Ascending aorta (tissue), 2 donors: ENCODE measurements at regions of chr6 and their contacts with region 1.

Region 1: DNA sequence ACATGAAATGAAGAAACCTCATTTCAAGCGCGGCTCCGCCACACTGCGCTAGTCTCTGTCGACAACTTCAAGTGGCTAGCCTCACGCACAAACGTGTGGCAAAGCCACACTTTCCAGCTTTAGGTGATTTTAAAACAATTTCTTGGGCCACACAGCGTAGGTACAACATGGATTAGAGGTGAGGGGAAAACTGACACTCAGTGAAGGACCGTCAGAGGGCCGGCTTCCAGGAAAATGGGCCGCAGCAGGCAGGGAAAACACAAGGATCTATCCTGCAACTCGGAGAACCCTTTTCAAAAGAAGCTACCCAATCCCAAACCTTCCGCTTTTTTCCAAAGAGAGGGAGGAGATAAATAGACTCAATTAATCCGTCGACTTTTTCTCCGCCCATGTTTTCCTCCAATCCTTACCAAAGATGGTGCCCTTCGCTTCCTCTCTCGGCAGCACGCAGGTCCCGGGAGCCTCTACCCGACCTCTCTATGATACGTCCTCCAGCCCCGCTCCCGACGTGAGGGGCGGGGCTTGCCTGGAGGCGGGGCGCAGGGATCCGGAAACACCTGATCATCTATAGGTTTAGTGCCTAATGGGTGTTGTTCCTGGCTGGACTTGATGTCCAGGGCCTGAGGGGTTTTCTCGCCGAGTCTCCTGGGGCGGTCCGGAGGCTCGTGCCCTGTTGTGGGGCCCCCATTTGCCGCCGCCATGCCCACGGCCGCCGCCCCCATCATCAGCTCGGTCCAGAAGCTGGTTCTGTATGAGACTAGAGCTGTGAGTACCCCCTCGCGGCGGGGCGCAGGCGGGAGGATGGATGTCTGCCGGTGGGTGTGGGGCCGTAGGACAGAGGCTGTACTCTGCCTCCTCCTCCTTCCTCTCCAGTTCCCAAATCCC is at the starts of genes AK9 and FIG4:
- DNase-seq: peak; percentile 86 to 96
- H3K4me3 ChIP-seq: peak within 1 kb of the TSS; percentile 65 to 74
- H3K27ac ChIP-seq: peak within 1 kb of the TSS; percentile 83 to 90
- H3K4me1 ChIP-seq: no peaks in the 10 kb centered on the region
- H3K27me3 ChIP-seq: no peaks in the 10 kb centered on the region
- CTCF ChIP-seq: peak in 2 of 3 experiments; percentile 3 to 38
- total RNA-seq, gene AK9: 0.75 TPM
- total RNA-seq, gene FIG4: 27.9 TPM

Region 2: DNA sequence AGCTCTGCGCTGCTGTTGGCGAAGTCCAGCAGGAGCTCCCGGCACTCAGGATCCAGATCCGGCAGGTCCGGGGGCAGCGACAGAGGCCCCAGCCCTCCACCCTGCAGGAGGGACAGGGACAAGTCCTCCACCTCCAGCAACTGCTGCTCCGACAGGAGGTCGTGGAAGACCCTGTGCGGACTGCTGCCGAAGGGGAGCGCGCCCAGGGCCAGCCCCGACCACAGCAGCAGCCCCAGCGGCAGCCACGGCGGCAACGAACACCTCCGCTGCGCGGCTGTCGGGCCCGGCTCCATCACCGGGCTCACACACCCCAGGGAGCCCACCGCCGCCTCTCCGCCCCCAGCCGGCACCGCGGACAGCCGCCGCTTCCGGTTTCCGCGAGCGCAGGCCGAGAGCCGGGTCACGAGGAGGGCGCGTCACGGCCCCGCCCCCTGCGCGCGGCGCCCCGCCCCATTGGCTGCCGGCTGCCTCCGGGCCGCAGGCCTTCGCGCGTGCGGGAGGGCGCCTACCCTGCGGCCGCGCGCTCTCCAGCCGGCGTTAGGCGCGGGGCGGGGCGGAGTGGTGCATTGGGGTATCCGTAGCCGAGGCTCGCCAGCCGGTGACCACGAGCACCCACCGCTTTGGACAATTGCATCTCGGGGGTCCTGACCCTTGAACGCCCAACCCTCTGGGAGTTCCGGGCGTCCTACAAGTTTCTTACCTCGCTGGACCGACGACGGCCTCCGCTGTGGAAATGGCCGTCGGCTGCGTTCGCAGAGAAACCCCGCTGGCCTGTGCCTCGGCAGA is 1616.4 kb before region 1 on chr6 and contains the start of gene OSTM1:
- intact Hi-C with region 1: loop called (anchors 10 kb)
- DNase-seq: peak; percentile 32 to 95
- H3K4me3 ChIP-seq: peak within 1 kb of the TSS; percentile 87 to 89
- H3K27ac ChIP-seq: peak within 1 kb of the TSS; percentile 74 to 78
- H3K4me1 ChIP-seq: peaks cover 3 to 10% of the 10 kb centered on the region in 2 donors
- H3K27me3 ChIP-seq: no peaks in the 10 kb centered on the region
- CTCF ChIP-seq: no peak
- total RNA-seq, gene OSTM1: 78.7 TPM

Region 3: GRCh38 chr6:109440331-109441068 is 250.5 kb before region 1 on chr6 and contains the starts of genes PPIL6 and SMPD2:
- intact Hi-C with region 1: loop called (anchors 5 kb)
- DNase-seq: peak in 1 of 2 donors; percentile 93
- H3K4me3 ChIP-seq: peak within 1 kb of the TSS; percentile 70 to 84
- H3K27ac ChIP-seq: peak within 1 kb of the TSS; percentile 77 to 81
- H3K4me1 ChIP-seq: peaks cover 0 to 10% of the 10 kb centered on the region in 2 donors
- H3K27me3 ChIP-seq: no peaks in the 10 kb centered on the region
- CTCF ChIP-seq: peak; percentile 25 to 39 (median 32)
- total RNA-seq, gene PPIL6: 0.11 TPM
- total RNA-seq, gene SMPD2: 14.2 TPM

Region 4: GRCh38 chr6:109482905-109483735 is 207.9 kb before region 1 on chr6 and contains the start of gene ZBTB24:
- intact Hi-C with region 1: loop called (anchors 1 kb)
- DNase-seq: peak; percentile 61 to 94
- H3K4me3 ChIP-seq: peak within 1 kb of the TSS; percentile 88 to 99
- H3K27ac ChIP-seq: peak within 1 kb of the TSS; percentile 78 to 81
- H3K4me1 ChIP-seq: peaks cover 8 to 31% of the 10 kb centered on the region in 2 donors
- H3K27me3 ChIP-seq: no peaks in the 10 kb centered on the region
- CTCF ChIP-seq: peak in 1 of 3 experiments; percentile 14
- total RNA-seq, gene ZBTB24: 10.2 TPM

Region 5: DNA sequence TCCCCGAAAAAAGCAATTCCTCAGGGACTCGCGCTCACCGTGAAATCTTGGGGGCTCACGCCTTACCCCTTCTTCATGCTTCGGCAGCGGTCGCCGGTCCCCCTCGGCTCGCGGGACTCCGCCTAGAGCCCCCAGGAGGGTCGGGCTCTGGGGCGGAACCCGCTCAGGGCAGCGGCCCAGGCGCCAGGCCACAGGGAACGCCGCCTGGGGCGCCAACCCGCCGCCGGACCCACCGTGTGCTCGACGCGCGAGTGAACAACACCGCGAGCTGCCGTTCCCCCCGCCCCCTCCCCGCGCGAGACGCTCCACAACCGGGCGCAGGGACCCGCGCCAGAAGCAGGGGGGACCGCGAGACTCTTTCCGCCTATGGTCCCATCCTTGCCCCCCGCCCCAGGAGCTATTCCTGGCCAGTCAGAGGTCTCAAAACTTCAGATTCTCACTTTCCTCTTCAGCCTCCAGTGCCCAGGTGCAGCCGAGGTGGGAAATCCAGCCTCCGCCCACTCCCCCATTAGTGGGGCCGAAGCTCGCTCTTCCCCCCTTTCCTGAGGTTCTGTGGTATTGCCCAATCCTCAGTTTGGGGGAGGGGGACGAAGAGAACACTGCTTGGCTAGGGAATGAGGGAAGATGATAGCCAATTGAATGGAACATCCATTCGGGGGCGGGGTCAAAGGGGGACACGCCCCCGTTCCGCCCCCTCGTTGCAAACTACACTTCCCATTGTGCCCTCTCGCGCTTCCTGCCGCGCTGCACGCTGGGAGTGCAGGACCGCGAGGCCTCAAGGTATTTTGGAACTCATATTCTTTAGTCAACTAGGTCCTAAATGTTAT is 488.6 kb after region 1 on chr6 and contains the start of gene WASF1:
- intact Hi-C with region 1: loop called (anchors 5 kb)
- DNase-seq: peak; percentile 84 to 98
- H3K4me3 ChIP-seq: peak within 1 kb of the TSS; percentile 85 to 86
- H3K27ac ChIP-seq: peak within 1 kb of the TSS; percentile 81 to 83
- H3K4me1 ChIP-seq: peaks cover 3 to 22% of the 10 kb centered on the region in 2 donors
- H3K27me3 ChIP-seq: no peaks in the 10 kb centered on the region
- CTCF ChIP-seq: peak in 1 of 3 experiments; percentile 13
- total RNA-seq, gene WASF1: 0.53 TPM

Region 6: GRCh38 chr6:110352563-110353262 is 661.7 kb after region 1 on chr6:
- intact Hi-C with region 1: loop called (anchors 5 kb)
- DNase-seq: no peak
- H3K4me3 ChIP-seq: peak overlapping the region in 1 of 2 donors; percentile 0
- H3K27ac ChIP-seq: peak overlapping the region; percentile 60 to 76
- H3K4me1 ChIP-seq: peaks cover 6 to 22% of the 10 kb centered on the region in 2 donors
- H3K27me3 ChIP-seq: no peaks in the 10 kb centered on the region
- CTCF ChIP-seq: no peak

Region 7: DNA sequence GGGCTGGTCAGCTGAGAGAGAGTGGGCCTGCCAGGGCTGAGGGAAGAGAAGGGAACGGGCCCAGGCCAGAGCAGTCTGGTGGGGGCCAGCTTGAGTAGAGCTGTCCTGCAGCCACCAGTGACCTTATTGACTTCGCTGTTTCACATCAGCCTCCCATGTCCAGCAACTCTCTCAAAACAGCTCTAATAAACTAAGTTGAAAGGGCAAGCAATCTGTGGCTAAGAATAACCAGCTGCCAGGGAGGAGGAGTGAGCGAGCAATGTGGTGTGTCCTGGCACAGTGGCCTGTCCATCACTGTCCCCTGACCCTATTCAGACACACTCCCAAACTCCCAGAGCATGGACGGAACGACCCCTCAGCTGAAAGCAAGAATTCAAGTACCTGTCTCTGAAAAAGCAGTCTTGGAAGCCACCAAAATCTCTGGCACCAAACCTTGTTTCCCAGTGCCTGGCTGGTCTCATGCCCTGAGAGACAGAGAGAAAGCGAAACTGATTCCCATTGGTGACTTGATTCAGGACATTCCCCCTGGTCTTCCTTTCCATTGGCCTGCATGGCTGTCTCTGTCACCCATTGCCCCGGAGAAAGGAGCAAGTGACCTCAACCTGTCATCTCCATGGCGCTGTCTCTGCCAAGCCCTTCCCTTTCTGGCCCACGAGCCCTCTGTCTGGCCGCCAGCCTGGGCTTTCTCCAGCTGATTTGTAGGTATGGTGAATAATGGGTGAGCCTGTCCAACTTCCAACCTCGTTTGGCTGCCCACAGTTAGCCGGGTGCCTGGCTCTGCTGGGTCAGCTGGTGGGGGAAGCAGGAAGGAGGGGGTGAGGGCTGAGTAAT is 724.3 kb after region 1 on chr6 and contains the start of gene DDO:
- intact Hi-C with region 1: loop called (anchors 10 kb)
- DNase-seq: peak; percentile 84 to 95
- H3K4me3 ChIP-seq: peak within 1 kb of the TSS; percentile 54
- H3K27ac ChIP-seq: peak within 1 kb of the TSS; percentile 79 to 83
- H3K4me1 ChIP-seq: peaks cover 4 to 12% of the 10 kb centered on the region in 2 donors
- H3K27me3 ChIP-seq: no peaks in the 10 kb centered on the region
- CTCF ChIP-seq: no peak
- total RNA-seq, gene DDO: 0.32 TPM